GM10248 (cell line): ENCODE measurements at regions of chr1 and their contacts with region 1.

Region 1: DNA sequence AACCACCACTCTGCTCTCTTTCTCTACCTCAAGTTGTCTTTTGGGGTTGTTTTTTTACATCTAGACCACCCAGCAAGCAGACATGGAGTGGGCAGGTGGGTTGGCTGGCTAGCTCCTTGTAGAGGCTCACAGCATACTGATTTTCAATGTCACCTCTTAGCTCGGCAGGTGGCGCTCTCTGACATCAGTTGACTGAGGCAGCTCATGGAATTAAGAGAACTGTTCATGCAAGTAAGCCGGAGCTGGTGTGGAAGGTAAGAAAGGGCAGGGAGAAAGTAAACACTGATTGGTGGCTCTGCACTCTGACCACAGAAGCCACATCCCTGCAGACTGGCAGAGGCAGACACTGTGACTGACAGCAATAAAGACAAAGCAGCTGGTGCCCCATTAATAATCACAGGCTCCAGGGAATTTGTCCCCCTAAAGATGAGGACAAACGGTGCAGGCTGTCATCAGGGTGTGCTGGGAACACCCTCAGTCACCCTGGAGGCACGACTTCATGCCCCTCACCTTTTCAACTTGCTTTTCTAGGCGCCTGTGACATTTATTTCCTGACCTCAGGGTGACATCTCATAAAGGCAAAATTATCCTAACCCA is 226.8 kb downstream of the LMX1A start:
- DNase-seq: peak; percentile 44
- CTCF ChIP-seq: peak; percentile 61

Region 2: DNA sequence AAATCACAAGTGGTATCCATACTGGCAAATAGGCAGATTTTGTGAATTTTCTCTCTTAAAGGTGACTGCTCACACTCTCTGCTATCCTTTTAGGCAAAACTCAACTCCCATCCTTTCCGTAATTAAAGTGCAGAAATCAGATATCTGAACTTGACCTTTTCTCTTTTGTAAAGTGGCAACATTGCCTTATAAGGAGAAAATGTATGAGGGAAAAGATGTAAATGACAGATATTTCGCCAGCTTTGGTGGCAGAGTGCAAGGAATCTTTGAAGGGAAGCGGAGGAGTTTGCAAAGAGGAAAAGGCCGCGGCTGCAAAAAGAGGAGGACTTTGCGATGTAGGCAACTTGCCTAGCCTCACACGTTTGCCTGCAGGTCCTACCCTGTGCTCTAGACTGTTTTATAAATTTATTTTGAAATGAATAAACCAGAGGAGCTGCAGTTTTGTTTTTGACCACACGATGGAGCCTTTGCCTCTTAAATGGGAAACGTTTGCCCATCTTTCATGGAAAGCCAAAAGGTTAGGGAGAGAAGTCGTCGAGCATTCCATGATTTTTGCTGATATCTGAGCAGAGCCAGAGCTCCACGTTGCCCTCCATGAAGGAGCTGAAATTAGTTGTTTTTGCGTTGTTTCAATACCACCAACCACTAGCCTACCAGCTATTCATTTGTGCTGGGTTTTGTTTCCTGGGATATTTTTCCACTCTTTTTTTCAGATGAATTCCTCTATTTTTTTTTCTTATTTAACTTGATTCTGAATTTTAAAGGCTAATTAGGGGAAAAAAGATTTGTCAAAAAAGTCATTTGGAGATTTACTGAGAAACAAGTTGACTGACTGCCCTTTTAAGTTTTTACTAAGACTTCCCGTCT is 15.4 kb before region 1 on chr1:
- CTCF ChIA-PET with region 1: interaction called, 22 read pairs
- POLR2A ChIA-PET with region 1: no interaction called
- DNase-seq: no peak
- CTCF ChIP-seq: peak; percentile 57

Region 3: DNA sequence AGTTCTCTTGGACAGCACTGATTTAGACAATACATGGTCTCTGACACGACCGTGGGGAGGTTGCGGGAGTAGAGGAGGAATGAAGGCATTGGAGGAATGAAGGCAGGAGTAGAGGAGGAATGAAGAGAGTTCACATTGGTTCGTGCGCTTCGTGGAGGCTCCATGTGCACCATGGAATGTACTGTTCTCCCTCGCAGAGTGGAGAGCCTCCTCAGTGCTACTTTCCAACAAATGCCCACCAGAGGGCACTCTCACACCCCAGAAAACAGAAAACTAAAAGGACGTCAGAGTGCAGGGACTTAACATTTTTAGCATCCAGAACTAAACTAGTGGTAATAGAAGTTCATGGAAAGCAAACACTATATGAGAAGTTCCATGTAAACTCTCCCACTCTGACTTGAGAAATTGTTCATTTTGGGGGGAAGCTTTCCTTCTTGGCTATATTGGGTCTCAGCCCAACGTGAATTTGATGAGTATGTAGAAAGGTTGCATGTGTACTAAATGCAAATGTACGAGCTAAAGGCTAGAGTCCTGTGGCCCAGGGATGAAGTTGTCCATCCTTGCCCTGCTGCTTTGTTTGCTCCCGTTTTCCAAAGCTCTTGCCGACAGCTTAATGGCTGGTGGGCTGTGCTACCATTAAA is 15.2 kb after region 1 on chr1:
- CTCF ChIA-PET with region 1: interaction called, 31 read pairs
- POLR2A ChIA-PET with region 1: no interaction called
- DNase-seq: peak; percentile 33
- CTCF ChIP-seq: peak; percentile 75

Region 4: DNA sequence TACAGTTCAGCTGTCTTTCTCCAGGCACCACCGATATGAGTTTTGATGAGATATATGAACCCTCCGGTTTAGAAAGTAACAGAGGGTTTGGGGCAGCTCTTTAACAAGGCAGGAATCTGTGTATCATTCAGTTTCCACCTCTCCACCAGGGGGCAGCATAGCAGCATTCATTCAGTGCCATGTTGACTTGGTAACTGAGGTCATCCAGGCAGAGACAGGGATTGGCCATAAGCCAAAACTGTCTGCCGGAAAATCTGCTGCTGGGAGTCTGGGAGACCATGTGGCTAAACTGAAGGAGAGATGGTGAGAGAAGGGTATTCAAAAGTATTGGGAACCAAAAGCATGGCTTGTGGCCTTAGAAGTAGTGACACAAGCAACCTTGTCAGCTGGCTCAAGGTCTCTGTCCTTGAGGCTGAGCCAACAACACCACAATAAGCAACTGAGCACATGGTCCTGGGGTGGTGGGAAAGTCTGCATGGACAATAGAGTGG is 128.3 kb after region 1 on chr1:
- CTCF ChIA-PET with region 1: no interaction called
- POLR2A ChIA-PET with region 1: no interaction called
- DNase-seq: peak; percentile 56
- CTCF ChIP-seq: peak; percentile 61